ENCODE measurements at regions of chr16 and their contacts with region 1.

Region 1: GRCh38 chr16:26374279-26374925 is 682.6 kb downstream of the HS3ST4 start:
- DNase-seq: no peak
- H3K4me3 ChIP-seq: no peak overlapping the region
- H3K27ac ChIP-seq: no peak overlapping the region
- H3K4me1 ChIP-seq: no peaks in the 10 kb centered on the region
- H3K27me3 ChIP-seq: no peaks in the 10 kb centered on the region
- CTCF ChIP-seq: no peak
- POLR2A ChIP-seq: no peak

Region 2: DNA sequence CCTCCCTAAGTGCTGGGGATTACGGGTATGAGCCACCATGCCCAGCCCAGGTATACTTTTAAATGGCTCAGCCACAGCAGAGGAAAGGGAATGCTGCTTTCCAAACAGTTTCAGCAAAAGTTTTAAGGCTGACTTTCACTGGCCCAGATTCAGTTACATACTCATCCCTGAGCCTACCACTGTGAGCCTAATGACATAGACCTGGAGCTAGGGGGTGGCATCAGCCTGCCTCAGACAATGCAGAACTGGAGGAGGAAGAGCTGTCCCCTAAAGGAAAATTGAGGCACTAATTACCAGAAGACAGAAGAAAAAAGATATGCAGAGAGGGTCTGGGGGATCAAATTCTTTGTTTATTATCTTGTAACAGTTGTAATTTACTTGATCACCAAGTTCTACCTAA is 638.8 kb before region 1 on chr16:
- intact Hi-C with region 1: loop called (anchors 10 kb)
- DNase-seq: no peak
- H3K4me3 ChIP-seq: no peak overlapping the region
- H3K27ac ChIP-seq: no peak overlapping the region
- H3K4me1 ChIP-seq: no peaks in the 10 kb centered on the region
- H3K27me3 ChIP-seq: no peaks in the 10 kb centered on the region
- CTCF ChIP-seq: no peak
- POLR2A ChIP-seq: no peak

Region 3: GRCh38 chr16:26189536-26189935 is 184.9 kb before region 1 on chr16:
- intact Hi-C with region 1: no loop called
- DNase-seq: no peak
- H3K4me3 ChIP-seq: no peak overlapping the region
- H3K27ac ChIP-seq: no peak overlapping the region
- H3K4me1 ChIP-seq: no peaks in the 10 kb centered on the region
- H3K27me3 ChIP-seq: peaks cover 0 to 4% (median 0%) of the 10 kb centered on the region in 4 donors
- CTCF ChIP-seq: no peak
- POLR2A ChIP-seq: no peak

Region 4: GRCh38 chr16:26269673-26270072 is 104.7 kb before region 1 on chr16:
- intact Hi-C with region 1: no loop called
- DNase-seq: no peak
- H3K4me3 ChIP-seq: no peak overlapping the region
- H3K27ac ChIP-seq: no peak overlapping the region
- H3K4me1 ChIP-seq: no peaks in the 10 kb centered on the region
- H3K27me3 ChIP-seq: no peaks in the 10 kb centered on the region
- CTCF ChIP-seq: no peak
- POLR2A ChIP-seq: no peak